Aorta (tissue), 5 donors: ENCODE measurements at regions of chr3 and their contacts with region 1.

Region 1: GRCh38 chr3:33717866-33718594 is at the start of gene CLASP2:
- DNase-seq: peak; percentile 93 to 96
- ATAC-seq: peak; percentile 95
- H3K4me3 ChIP-seq: peak within 1 kb of the TSS; percentile 73
- H3K27ac ChIP-seq: peak within 1 kb of the TSS; percentile 91 to 98
- H3K4me1 ChIP-seq: peaks cover 5 to 12% of the 10 kb centered on the region in 2 donors
- H3K27me3 ChIP-seq: no peaks in the 10 kb centered on the region
- total RNA-seq, gene CLASP2: 103 to 168 TPM

Region 2: DNA sequence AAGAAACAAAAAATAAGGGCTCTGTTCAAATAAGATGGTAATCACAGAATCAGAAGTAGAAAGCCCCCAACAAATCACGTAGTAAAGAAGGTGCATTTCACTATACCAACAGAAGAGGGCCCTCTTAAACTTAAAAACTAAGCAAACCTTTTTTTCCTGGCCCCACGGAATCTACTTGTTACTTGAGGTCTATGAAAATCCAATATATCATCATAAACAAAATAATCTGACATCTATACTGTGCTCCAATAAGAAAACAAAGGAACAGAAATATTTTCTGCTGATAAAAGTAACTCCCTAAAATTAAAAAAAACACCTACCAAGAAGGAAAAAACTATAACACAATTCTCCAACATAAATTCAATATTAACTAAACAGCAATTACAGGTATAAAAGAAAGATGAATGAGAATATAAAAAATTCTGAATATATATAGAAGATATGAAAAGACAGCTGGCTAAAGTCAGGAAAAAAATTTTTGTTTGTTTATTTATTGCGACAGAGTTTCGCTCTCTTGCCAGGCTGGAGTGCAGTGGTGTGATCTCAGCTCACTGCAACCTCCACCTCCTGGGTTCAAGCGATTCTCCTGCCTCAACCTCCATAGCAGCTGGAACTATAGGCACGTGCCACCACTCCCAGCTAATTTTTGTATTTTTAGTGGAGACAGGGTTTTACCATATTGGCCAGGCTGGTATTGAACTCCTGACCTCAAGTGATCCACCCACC is 81.7 kb before region 1 on chr3:
- intact Hi-C with region 1: loop called (anchors 2 to 5 kb)
- DNase-seq: no peak
- ATAC-seq: no peak
- H3K4me3 ChIP-seq: no peak overlapping the region
- H3K27ac ChIP-seq: no peak overlapping the region
- H3K4me1 ChIP-seq: no peaks in the 10 kb centered on the region
- H3K27me3 ChIP-seq: no peaks in the 10 kb centered on the region

Region 3: GRCh38 chr3:33681667-33682066 is 36.4 kb before region 1 on chr3:
- intact Hi-C with region 1: no loop called
- DNase-seq: no peak
- ATAC-seq: no peak
- H3K4me3 ChIP-seq: no peak overlapping the region
- H3K27ac ChIP-seq: no peak overlapping the region
- H3K4me1 ChIP-seq: no peaks in the 10 kb centered on the region
- H3K27me3 ChIP-seq: no peaks in the 10 kb centered on the region

Region 4: DNA sequence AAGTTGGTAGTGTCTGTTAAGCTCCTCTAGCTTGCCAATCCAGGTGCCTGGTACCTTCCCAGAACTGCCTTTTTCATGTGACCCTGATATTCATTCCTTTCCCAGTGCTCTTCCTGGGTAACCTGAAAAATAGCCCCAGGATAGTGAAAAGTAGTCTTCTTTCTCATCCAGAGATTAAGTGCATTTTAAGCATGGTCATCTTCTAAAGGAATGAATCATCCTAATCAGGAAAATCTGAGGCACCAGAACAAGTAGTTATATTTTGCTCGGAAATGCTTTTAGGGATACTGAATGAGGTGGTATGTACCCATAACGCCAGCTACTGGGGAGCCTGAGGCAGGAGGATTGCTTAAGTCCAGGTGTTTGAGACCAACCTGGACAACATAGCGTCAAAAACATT is 57.3 kb after region 1 on chr3:
- intact Hi-C with region 1: loop called in 1 of 2 experiments (anchors 5 kb)
- DNase-seq: no peak
- ATAC-seq: no peak
- H3K4me3 ChIP-seq: no peak overlapping the region
- H3K27ac ChIP-seq: no peak overlapping the region
- H3K4me1 ChIP-seq: no peaks in the 10 kb centered on the region
- H3K27me3 ChIP-seq: no peaks in the 10 kb centered on the region

Region 5: DNA sequence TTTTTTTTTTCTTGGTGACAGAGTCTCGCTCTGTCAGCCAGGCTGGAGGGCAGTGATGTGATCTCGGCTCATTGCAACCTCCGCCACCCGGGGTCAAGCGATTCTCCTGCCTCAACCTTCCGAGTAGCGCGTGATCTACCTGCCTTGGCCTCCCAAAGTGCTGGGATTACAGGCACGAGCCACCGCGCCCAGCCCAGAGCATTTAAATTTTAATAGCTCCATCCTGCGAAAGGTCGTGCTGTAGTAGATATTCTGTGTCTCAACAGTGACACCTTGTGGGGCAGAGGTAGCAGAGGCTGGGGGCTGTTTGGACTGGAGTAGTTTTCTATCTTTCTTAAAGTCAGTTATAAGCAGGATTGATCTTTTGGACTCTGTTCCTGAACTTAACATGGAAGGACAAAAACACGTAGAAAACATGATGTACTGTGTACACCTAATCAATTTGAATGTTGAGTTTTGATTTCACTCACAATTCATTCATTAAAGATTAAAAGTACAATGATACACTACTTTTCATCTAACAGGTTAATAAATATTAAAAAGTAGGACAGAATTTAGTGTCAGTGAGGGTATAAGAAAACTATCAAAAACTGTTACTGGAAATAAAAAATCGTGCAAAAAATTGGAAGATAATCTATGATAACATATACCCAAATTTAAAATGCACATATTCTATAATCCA is 69.4 kb after region 1 on chr3:
- intact Hi-C with region 1: loop called in 1 of 2 experiments (anchors 5 kb)
- DNase-seq: peak in 1 of 2 donors; percentile 52
- ATAC-seq: peak; percentile 90
- H3K4me3 ChIP-seq: peak overlapping the region in 1 of 2 donors; percentile 12
- H3K27ac ChIP-seq: no peak overlapping the region
- H3K4me1 ChIP-seq: peaks cover 0 to 2% of the 10 kb centered on the region in 2 donors
- H3K27me3 ChIP-seq: no peaks in the 10 kb centered on the region